Naive thymus-derived CD4-positive, alpha-beta T cell (primary cell): ENCODE measurements at regions of chr1 and their contacts with region 1.

Region 1: DNA sequence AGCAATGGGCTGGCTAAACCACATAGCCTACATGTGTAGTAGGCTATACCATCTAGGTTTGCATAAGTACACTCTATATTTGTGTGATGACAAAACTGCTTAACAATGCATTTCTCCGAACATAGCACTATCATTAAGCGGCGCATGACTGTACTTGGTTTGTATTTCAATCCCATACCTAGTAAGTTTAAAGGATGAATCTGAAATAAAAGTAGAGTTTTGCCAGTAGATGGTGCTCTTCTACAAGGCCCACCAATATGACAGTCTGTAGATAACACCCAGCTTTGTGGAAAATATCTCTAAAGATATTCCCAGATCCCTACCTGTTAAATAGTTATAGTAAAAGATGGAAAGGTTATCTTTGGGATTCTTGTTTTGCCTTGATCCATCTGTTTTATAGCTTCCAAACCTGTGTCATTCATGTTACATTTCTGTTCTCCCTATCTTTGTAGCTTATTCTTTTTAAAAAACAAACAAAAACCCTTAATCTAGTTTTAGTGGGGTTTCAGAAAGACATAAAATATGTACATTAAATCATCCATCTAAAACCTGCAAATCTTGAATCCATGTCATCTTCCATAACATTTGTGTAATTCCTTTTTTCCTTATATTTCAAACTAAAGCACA is 33.9 kb upstream of the ASPM start:
- DNase-seq: peak in 5 of 9 donors; percentile 24 to 45 (median 30)
- ATAC-seq: peak; percentile 70
- H3K4me3 ChIP-seq: no peak overlapping the region
- H3K4me3 Mint-ChIP-seq: no peak overlapping the region
- H3K27ac ChIP-seq: no peak overlapping the region
- H3K27ac Mint-ChIP-seq: no peak overlapping the region
- H3K4me1 ChIP-seq: no peaks in the 10 kb centered on the region
- H3K4me1 Mint-ChIP-seq: peaks cover 2 to 8% (median 3%) of the 10 kb centered on the region in 7 donors
- H3K27me3 ChIP-seq: no peaks in the 10 kb centered on the region
- H3K27me3 Mint-ChIP-seq: no peaks in the 10 kb centered on the region

Region 2: DNA sequence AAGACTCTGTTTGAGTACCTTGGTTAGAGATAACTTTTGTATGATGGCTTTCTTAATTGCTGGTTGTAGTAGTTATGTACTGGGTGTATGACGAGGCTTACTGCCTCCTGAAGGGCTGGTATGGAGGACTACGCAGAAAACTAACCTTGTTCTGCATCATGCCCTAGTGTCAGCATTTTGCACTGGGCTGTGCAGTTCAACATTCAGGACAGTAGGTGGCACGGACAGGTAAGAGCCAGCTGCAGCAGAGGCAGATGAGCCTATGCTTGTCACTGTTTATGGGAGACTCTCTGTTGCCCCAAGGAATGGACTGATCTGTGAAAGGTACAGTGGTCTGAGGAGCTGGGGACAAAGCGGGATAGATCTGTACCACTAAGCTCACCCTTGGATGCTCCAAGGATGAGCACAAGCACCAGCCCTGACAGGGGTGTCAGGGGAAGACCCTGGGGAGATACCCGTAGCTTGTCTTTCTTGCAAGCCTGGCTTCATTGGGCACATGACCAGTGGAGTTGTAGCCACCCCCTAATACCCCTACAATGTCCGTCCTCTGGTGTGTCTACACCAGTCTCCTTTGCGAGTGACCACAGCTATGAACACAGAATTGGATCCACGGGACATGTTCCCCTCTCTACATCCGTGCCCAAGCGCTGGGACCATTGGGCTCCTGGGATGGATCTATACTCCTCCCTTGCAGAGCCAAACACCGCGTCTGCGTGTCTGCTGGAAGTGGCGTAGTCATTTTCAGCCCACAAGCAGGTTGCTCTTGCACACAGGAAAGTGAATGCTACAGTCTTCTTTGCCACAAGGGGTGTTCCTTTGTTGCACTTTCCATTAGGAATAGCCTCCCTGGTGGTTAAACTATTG is 456.8 kb before region 1 on chr1:
- CTCF ChIA-PET with region 1: no interaction called
- POLR2A ChIA-PET with region 1: no interaction called
- intact Hi-C with region 1: loop called in 1 of 2 experiments (anchors 10 kb)
- DNase-seq: peak in 4 of 9 donors; percentile 7 to 44 (median 28)
- ATAC-seq: peak; percentile 47
- H3K4me3 ChIP-seq: no peak overlapping the region
- H3K4me3 Mint-ChIP-seq: no peak overlapping the region
- H3K27ac ChIP-seq: no peak overlapping the region
- H3K27ac Mint-ChIP-seq: no peak overlapping the region
- H3K4me1 ChIP-seq: no peaks in the 10 kb centered on the region
- H3K4me1 Mint-ChIP-seq: no peaks in the 10 kb centered on the region
- H3K27me3 ChIP-seq: no peaks in the 10 kb centered on the region
- H3K27me3 Mint-ChIP-seq: peaks cover 0 to 6% (median 1%) of the 10 kb centered on the region in 5 donors

Region 3: GRCh38 chr1:197127246-197127912 is 53.0 kb before region 1 on chr1:
- CTCF ChIA-PET with region 1: no interaction called
- POLR2A ChIA-PET with region 1: no interaction called
- intact Hi-C with region 1: no loop called
- DNase-seq: no peak
- ATAC-seq: no peak
- H3K4me3 ChIP-seq: no peak overlapping the region
- H3K4me3 Mint-ChIP-seq: no peak overlapping the region
- H3K27ac ChIP-seq: no peak overlapping the region
- H3K27ac Mint-ChIP-seq: no peak overlapping the region
- H3K4me1 ChIP-seq: no peaks in the 10 kb centered on the region
- H3K4me1 Mint-ChIP-seq: peaks cover 0 to 7% (median 0%) of the 10 kb centered on the region in 7 donors
- H3K27me3 ChIP-seq: no peaks in the 10 kb centered on the region
- H3K27me3 Mint-ChIP-seq: no peaks in the 10 kb centered on the region

Region 4: GRCh38 chr1:197268012-197268411 is 87.6 kb after region 1 on chr1 and contains the start of gene CRB1:
- CTCF ChIA-PET with region 1: no interaction called
- POLR2A ChIA-PET with region 1: no interaction called
- intact Hi-C with region 1: loop called in 1 of 2 experiments (anchors 5 kb)
- DNase-seq: no peak
- ATAC-seq: no peak
- H3K4me3 ChIP-seq: no peak within 1 kb of the TSS
- H3K4me3 Mint-ChIP-seq: no peak within 1 kb of the TSS
- H3K27ac ChIP-seq: no peak within 1 kb of the TSS
- H3K27ac Mint-ChIP-seq: no peak within 1 kb of the TSS
- H3K4me1 ChIP-seq: no peaks in the 10 kb centered on the region
- H3K4me1 Mint-ChIP-seq: peaks cover 0 to 2% (median 0%) of the 10 kb centered on the region in 7 donors
- H3K27me3 ChIP-seq: no peaks in the 10 kb centered on the region
- H3K27me3 Mint-ChIP-seq: peaks cover 0 to 8% (median 0%) of the 10 kb centered on the region in 5 donors
- total RNA-seq, gene CRB1: 0.08 to 3.2 (median 0.57) TPM in 4 of 5 experiments, not detected in the other

Region 5: DNA sequence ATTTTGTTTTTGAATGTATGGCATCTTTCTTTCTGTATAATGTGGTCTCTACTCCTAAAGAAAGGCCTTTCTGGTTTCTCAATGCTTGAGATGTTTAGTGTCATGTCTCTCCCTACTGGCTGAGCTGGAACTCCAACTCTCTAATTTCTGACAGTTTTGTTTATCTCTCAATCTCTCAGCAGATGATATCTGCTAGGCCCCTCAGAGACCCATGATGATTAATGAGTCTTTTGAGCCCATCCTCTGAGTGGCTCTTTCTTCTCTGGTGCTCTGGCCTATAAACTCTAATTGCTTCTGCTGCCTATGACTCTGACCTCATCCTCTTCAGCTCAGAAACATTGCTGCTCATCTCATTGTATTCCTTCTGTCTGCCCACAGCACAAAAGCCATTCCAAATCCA is 134.3 kb after region 1 on chr1:
- CTCF ChIA-PET with region 1: no interaction called
- POLR2A ChIA-PET with region 1: no interaction called
- intact Hi-C with region 1: loop called in 1 of 2 experiments (anchors 1 kb)
- DNase-seq: no peak
- ATAC-seq: no peak
- H3K4me3 ChIP-seq: no peak overlapping the region
- H3K4me3 Mint-ChIP-seq: no peak overlapping the region
- H3K27ac ChIP-seq: no peak overlapping the region
- H3K27ac Mint-ChIP-seq: no peak overlapping the region
- H3K4me1 ChIP-seq: no peaks in the 10 kb centered on the region
- H3K4me1 Mint-ChIP-seq: no peaks in the 10 kb centered on the region
- H3K27me3 ChIP-seq: no peaks in the 10 kb centered on the region
- H3K27me3 Mint-ChIP-seq: no peaks in the 10 kb centered on the region

Region 6: GRCh38 chr1:197356723-197357533 is 176.6 kb after region 1 on chr1:
- CTCF ChIA-PET with region 1: interaction called, 26 read pairs
- POLR2A ChIA-PET with region 1: no interaction called
- intact Hi-C with region 1: loop called (anchors 1 kb)
- DNase-seq: peak in 5 of 9 donors; percentile 19 to 36 (median 25)
- ATAC-seq: peak; percentile 68
- H3K4me3 ChIP-seq: no peak overlapping the region
- H3K4me3 Mint-ChIP-seq: no peak overlapping the region
- H3K27ac ChIP-seq: no peak overlapping the region
- H3K27ac Mint-ChIP-seq: no peak overlapping the region
- H3K4me1 ChIP-seq: no peaks in the 10 kb centered on the region
- H3K4me1 Mint-ChIP-seq: peaks cover 0 to 3% (median 0%) of the 10 kb centered on the region in 7 donors
- H3K27me3 ChIP-seq: no peaks in the 10 kb centered on the region
- H3K27me3 Mint-ChIP-seq: no peaks in the 10 kb centered on the region